CD14-positive monocyte (primary cell): ENCODE measurements at regions of chr1 and their contacts with region 1.

Region 1: DNA sequence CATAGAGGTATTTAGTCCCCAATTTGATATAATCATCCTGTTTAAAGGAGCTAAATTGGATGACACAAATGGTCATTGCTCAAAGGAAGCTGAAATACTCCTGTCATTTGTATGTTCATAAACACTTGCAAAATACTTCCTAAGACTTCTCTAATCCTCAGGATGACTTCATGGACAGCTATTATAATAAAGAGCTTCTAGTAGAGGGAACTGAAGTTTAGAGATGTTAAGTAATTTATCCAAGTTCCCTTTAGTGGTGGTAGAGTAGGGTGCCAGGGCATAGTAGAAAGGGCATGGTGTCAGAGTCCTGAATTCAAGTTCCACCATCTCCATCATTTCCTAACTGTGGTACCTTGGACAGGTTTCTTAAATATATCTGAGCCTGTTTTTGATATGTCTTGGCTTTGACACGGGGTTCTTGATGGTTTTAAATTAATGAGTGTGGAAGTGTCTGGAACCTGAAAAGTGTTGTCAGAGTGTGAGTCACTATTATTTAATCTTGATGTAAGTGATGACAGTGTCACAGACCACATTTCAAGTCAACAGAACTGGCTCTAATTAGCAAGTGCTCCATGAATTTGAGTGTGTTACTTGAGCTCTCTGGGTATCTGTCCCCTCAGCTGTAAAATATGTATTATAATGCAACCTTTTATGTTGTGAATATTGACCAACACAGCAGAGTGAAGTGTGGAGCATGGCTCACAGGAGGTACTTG is 12.1 kb upstream of the GBP6 start:
- DNase-seq: peak; percentile 73 to 93 (median 84)
- H3K4me3 ChIP-seq: peak overlapping the region in 1 of 3 experiments; percentile 12
- H3K4me3 Mint-ChIP-seq: no peak overlapping the region
- H3K27ac ChIP-seq: peak overlapping the region; percentile 51 to 92
- H3K27ac Mint-ChIP-seq: peak overlapping the region; percentile 92 to 99 (median 97)
- H3K4me1 ChIP-seq: peaks cover 42 to 45% of the 10 kb centered on the region in 2 donors
- H3K4me1 Mint-ChIP-seq: peaks cover 45% of the 10 kb centered on the region
- H3K27me3 ChIP-seq: no peaks in the 10 kb centered on the region
- H3K27me3 Mint-ChIP-seq: no peaks in the 10 kb centered on the region
- CTCF ChIP-seq: no peak

Region 2: GRCh38 chr1:89198491-89199072 is 153.2 kb before region 1 on chr1 and contains the start of gene GBP4:
- intact Hi-C with region 1: loop called in 1 of 2 experiments (anchors 5 kb)
- DNase-seq: peak; percentile 48 to 77 (median 69)
- H3K4me3 ChIP-seq: peak within 1 kb of the TSS; percentile 83 to 98 (median 84)
- H3K4me3 Mint-ChIP-seq: peak within 1 kb of the TSS; percentile 94 to 100
- H3K27ac ChIP-seq: peak within 1 kb of the TSS; percentile 71 to 83
- H3K27ac Mint-ChIP-seq: peak within 1 kb of the TSS; percentile 81 to 93 (median 89)
- H3K4me1 ChIP-seq: peaks cover 14 to 30% of the 10 kb centered on the region in 2 donors
- H3K4me1 Mint-ChIP-seq: peaks cover 46% of the 10 kb centered on the region
- H3K27me3 ChIP-seq: peaks cover 0 to 12% of the 10 kb centered on the region in 2 donors
- H3K27me3 Mint-ChIP-seq: peaks cover 8 to 20% (median 11%) of the 10 kb centered on the region in 3 donors
- CTCF ChIP-seq: no peak
- polyA plus RNA-seq, gene GBP4: 10.3 to 17.4 (median 13.0) TPM

Region 3: GRCh38 chr1:89271341-89272015 is 80.3 kb before region 1 on chr1:
- intact Hi-C with region 1: loop called in 1 of 2 experiments (anchors 2 kb)
- DNase-seq: peak; percentile 43 to 61 (median 59)
- H3K4me3 ChIP-seq: peak overlapping the region; percentile 58 to 94 (median 77)
- H3K4me3 Mint-ChIP-seq: peak overlapping the region; percentile 93 to 98
- H3K27ac ChIP-seq: peak overlapping the region in 1 of 2 donors; percentile 84
- H3K27ac Mint-ChIP-seq: peak overlapping the region in 6 of 7 donors; percentile 23 to 97 (median 71)
- H3K4me1 ChIP-seq: peaks cover 38 to 58% of the 10 kb centered on the region in 2 donors
- H3K4me1 Mint-ChIP-seq: peaks cover 61% of the 10 kb centered on the region
- H3K27me3 ChIP-seq: no peaks in the 10 kb centered on the region
- H3K27me3 Mint-ChIP-seq: no peaks in the 10 kb centered on the region
- CTCF ChIP-seq: no peak

Region 4: GRCh38 chr1:89286549-89287180 is 65.1 kb before region 1 on chr1:
- intact Hi-C with region 1: loop called (anchors 10 kb)
- DNase-seq: peak in 2 of 3 donors; percentile 13 to 31
- H3K4me3 ChIP-seq: peak overlapping the region in 2 of 3 experiments; percentile 34 to 52
- H3K4me3 Mint-ChIP-seq: peak overlapping the region in 1 of 2 donors; percentile 52
- H3K27ac ChIP-seq: peak overlapping the region in 1 of 2 donors; percentile 69
- H3K27ac Mint-ChIP-seq: peak overlapping the region in 3 of 7 donors; percentile 6 to 73 (median 47)
- H3K4me1 ChIP-seq: peaks cover 12 to 17% of the 10 kb centered on the region in 2 donors
- H3K4me1 Mint-ChIP-seq: peaks cover 15% of the 10 kb centered on the region
- H3K27me3 ChIP-seq: no peaks in the 10 kb centered on the region
- H3K27me3 Mint-ChIP-seq: peaks cover 0 to 3% (median 0%) of the 10 kb centered on the region in 3 donors
- CTCF ChIP-seq: no peak

Region 5: GRCh38 chr1:89298461-89298860 is 53.3 kb before region 1 on chr1:
- intact Hi-C with region 1: loop called in 1 of 2 experiments (anchors 10 kb)
- DNase-seq: no peak
- H3K4me3 ChIP-seq: no peak overlapping the region
- H3K4me3 Mint-ChIP-seq: no peak overlapping the region
- H3K27ac ChIP-seq: no peak overlapping the region
- H3K27ac Mint-ChIP-seq: no peak overlapping the region
- H3K4me1 ChIP-seq: no peaks in the 10 kb centered on the region
- H3K4me1 Mint-ChIP-seq: peaks cover 3% of the 10 kb centered on the region
- H3K27me3 ChIP-seq: no peaks in the 10 kb centered on the region
- H3K27me3 Mint-ChIP-seq: no peaks in the 10 kb centered on the region
- CTCF ChIP-seq: no peak

Region 6: DNA sequence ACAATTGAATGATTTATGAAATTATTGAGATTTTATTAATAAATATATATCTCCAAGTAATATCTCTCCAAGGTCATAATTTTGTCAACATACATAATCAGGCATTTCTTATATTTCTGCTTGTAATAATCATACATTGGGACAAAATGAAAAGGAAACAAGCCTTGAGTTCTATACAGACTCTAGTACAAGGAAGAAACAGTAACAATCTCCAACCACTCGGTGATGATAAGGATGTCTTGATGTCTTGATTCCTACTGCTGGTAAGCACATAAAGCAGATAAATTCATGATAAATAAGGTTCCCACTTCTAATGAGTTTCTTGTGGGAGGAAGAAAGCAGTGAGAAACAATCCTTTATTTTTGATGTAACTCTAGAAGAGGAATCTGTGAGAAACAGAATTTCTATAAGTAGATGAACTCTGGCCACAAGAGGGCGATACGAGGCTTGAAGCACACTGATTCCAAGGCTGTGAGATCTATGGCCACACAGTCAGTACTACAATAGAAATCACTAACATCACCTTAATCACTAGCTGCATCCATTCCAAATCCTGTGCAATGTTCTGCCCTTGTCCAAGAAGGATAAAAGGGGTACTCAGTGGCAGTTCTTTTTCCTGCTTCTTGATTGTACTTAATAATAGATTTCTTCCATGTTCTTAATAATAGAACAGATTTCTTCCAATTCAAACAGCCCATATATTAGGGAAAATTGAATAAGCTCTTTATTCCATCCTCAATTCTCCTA is 131.4 kb after region 1 on chr1:
- intact Hi-C with region 1: no loop called
- DNase-seq: peak; percentile 56 to 75 (median 70)
- H3K4me3 ChIP-seq: no peak overlapping the region
- H3K4me3 Mint-ChIP-seq: no peak overlapping the region
- H3K27ac ChIP-seq: no peak overlapping the region
- H3K27ac Mint-ChIP-seq: no peak overlapping the region
- H3K4me1 ChIP-seq: peaks cover under 1 to 16% of the 10 kb centered on the region in 2 donors
- H3K4me1 Mint-ChIP-seq: peaks cover 14% of the 10 kb centered on the region
- H3K27me3 ChIP-seq: no peaks in the 10 kb centered on the region
- H3K27me3 Mint-ChIP-seq: peaks cover 1 to 3% (median 2%) of the 10 kb centered on the region in 3 donors
- CTCF ChIP-seq: peak; percentile 87